PC-3 (cell line): ENCODE measurements at regions of chr7 and their contacts with region 1.

Region 1: GRCh38 chr7:48875045-48875916 is 49.1 kb upstream of the CDC14C start:
- DNase-seq: peak; percentile 72
- ATAC-seq: peak; percentile 100
- H3K4me3 ChIP-seq: peak overlapping the region; percentile 34; the same call in 1 of the 2 replicates
- H3K27ac ChIP-seq: no peak overlapping the region
- H3K4me1 ChIP-seq: no peaks in the 10 kb centered on the region
- H3K27me3 ChIP-seq: no peaks in the 10 kb centered on the region
- CTCF ChIP-seq: peak; percentile 80

Region 2: DNA sequence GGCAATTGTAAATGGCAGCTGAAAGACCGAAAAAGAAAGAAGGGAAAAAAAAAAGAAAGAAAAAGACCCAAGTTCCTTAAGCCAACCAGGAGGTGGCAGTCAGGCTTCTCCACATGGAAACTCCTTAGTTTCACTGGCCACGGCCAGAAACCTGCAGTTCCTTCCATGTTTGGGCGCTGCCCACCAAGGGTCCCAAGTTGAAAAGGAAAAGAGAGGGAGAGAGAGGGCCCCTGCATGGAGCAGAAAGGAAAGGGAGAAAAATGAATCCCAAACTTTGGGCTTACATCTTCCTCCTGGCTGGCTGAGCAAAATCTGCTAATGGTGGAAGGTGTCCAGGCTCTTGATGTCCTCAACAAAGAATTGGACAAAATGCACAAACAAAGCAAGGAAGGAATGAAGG is 735.8 kb before region 1 on chr7:
- CTCF ChIA-PET with region 1: no interaction called
- POLR2A ChIA-PET with region 1: no interaction called
- intact Hi-C with region 1: loop called (anchors 1 kb)
- DNase-seq: peak; percentile 56
- ATAC-seq: peak; percentile 49
- H3K4me3 ChIP-seq: no peak overlapping the region
- H3K27ac ChIP-seq: peak overlapping the region; percentile 35
- H3K4me1 ChIP-seq: peaks cover 12% of the 10 kb centered on the region
- H3K27me3 ChIP-seq: no peaks in the 10 kb centered on the region
- CTCF ChIP-seq: peak; percentile 66

Region 3: DNA sequence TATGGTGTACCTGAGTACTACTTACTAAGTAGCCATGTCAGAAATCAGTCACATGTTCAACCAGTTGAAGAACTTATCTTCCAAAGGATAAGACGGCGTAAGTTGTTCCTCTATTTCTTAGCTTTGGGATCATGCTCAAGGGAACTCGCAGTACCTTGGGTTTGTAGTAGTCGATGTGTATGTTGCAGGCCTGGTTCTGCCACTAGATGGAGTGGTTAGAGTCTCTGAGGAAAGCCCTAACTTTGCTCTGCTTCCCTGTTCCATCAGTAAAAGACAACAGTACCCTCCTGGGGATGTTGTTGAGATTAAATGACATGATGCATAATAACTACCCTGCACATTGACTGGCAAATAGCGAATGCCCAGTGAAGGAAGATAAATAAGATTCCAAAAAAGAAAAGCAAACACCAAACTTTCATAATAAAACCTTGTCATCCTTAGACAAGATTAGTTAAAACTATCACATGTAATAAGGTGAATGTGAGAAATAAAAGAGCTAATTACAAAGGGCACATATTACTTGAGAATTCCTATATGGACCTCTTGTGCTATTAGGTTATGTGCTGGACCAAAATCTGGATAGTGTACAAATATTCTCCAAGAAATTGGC is 538.2 kb before region 1 on chr7:
- CTCF ChIA-PET with region 1: no interaction called
- POLR2A ChIA-PET with region 1: no interaction called
- intact Hi-C with region 1: loop called (anchors 1 kb)
- DNase-seq: peak; percentile 68
- ATAC-seq: peak; percentile 99
- H3K4me3 ChIP-seq: no peak overlapping the region
- H3K27ac ChIP-seq: no peak overlapping the region
- H3K4me1 ChIP-seq: no peaks in the 10 kb centered on the region
- H3K27me3 ChIP-seq: no peaks in the 10 kb centered on the region
- CTCF ChIP-seq: peak; percentile 90

Region 4: GRCh38 chr7:48637382-48637781 is 237.9 kb before region 1 on chr7:
- CTCF ChIA-PET with region 1: no interaction called
- POLR2A ChIA-PET with region 1: no interaction called
- intact Hi-C with region 1: loop called (anchors 5 kb)
- DNase-seq: peak; percentile 86
- ATAC-seq: peak; percentile 91
- H3K4me3 ChIP-seq: no peak overlapping the region
- H3K27ac ChIP-seq: peak overlapping the region; percentile 56
- H3K4me1 ChIP-seq: peaks cover 21% of the 10 kb centered on the region
- H3K27me3 ChIP-seq: no peaks in the 10 kb centered on the region
- CTCF ChIP-seq: no peak

Region 5: DNA sequence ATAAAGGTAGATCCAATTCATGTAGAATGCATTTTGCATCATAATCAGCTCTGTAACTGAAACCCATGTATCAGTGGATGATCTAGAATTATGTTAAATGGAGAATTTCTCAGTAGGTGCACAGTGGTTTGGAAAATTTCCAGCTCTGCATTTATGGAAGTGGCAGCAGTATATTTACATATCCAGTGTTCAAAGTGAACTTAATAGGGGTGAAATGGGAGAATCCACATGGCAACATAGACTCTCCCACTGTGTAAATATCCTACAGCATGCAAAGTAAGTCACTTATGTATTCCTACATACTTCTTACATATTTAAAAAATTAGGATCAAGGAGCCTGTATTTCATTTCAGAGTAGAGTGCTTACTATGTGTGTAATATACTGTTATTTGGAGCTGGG is 84.4 kb after region 1 on chr7:
- CTCF ChIA-PET with region 1: no interaction called
- POLR2A ChIA-PET with region 1: no interaction called
- intact Hi-C with region 1: no loop called
- DNase-seq: no peak
- ATAC-seq: no peak
- H3K4me3 ChIP-seq: no peak overlapping the region
- H3K27ac ChIP-seq: no peak overlapping the region
- H3K4me1 ChIP-seq: no peaks in the 10 kb centered on the region
- H3K27me3 ChIP-seq: peaks cover 43% of the 10 kb centered on the region
- CTCF ChIP-seq: no peak